Testis (tissue), 5 donors: ENCODE measurements at regions of chr2 and their contacts with region 1.

Region 1: DNA sequence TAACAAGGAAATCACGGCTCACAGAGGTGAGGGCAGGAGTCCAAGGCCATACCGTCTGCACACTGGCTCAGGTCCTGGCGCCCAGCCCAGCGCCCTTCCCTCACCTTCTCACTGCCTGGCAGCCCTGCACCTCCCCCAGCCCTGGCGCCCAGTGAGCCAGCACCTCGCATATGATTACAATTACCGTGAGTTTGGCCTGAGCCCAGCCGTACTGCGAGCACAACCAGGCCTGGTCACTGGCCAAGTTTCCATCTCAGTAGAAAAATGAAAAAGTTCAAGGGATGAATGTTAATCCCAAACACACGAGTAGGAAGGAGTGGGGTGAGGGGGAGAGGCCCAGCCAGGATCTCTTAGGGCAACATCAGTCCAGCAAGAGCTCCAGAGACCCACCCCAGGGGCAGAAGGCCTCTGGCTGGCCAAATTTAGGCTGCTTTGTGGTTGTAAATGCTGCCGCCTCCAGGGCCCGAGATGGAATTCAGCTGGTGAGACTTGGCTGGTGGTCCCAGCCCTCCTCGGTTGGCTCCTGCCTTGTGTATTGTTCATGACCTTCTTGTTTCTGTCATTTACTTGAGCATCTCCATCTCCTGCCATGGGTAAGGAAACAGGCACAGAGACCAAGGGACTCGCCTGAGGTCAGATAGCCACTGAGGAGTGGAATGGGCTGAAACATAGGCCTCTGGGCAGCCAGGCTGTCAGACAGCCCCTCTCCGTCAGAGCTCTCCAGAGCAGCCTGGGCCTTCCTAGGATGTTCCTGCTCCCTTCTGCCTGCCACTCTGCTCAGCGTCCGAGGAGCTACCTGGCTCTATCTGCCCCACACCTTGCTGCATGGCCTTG is 68.2 kb downstream of the MCFD2 start:
- DNase-seq: peak; percentile 95
- H3K4me3 ChIP-seq: no peak overlapping the region
- H3K27ac ChIP-seq: peak overlapping the region; percentile 84 to 89
- H3K4me1 ChIP-seq: peaks cover 55% of the 10 kb centered on the region
- H3K27me3 ChIP-seq: no peaks in the 10 kb centered on the region
- CTCF ChIP-seq: no peak
- POLR2A ChIP-seq: no peak

Region 2: DNA sequence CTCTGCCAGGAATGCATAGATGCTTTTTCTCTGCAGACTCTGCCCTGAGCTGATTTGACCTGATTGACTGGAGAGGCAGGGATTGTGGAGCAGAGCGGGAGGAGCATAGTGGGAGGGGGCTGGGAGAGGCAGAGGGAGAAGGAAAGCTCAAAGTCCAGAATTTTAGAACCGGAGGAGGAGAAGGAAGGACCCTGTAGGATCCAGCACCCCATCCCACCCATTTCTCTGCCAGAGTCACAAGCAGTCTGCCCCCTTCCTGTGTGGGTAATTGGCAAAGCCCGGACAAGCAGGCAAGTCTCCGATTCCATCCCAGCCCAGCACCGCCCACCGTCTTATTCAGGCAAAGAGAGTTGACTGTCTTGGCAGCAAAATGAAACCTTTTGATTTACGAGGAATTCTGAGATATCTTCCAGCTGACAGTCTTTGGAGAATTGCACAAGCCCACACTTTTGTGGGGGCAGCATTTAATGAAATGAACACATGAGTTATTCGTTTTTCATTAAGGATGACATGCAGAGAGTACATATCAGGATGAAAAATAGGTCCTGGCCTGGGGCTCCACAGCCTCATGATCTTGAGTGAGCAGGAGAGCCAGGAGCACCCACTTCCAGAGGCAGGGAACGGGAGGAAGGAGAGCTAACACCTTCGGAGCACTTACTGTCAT is 35.0 kb before region 1 on chr2:
- intact Hi-C with region 1: loop called (anchors 5 kb)
- DNase-seq: peak; percentile 39
- H3K4me3 ChIP-seq: no peak overlapping the region
- H3K27ac ChIP-seq: no peak overlapping the region
- H3K4me1 ChIP-seq: peaks cover 29% of the 10 kb centered on the region
- H3K27me3 ChIP-seq: no peaks in the 10 kb centered on the region
- CTCF ChIP-seq: no peak
- POLR2A ChIP-seq: no peak

Region 3: DNA sequence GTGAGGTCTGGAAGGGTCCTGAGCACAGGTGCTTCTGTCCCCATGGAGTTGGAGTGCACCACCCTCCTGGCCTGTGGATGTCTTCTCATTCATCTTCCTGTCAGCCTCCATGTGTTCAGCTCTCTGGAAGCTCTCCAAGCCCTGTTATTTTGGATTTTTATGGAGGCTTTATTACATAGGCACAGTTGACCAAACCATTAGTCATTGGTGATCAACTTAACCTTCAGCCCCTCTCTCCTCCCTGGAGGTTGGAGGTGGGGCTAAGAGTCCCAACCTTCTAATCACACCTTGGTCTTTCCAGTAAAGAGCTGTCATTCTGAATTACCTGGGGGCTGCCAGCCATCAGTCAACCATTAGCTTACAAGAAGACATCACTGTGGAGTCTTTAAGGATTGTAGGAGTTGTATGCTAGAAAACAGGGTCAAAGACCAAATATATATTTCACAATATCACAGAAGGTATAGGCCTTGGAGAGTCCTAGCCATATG is 75.6 kb after region 1 on chr2:
- intact Hi-C with region 1: no loop called
- DNase-seq: no peak
- H3K4me3 ChIP-seq: no peak overlapping the region
- H3K27ac ChIP-seq: no peak overlapping the region
- H3K4me1 ChIP-seq: no peaks in the 10 kb centered on the region
- H3K27me3 ChIP-seq: no peaks in the 10 kb centered on the region
- CTCF ChIP-seq: no peak
- POLR2A ChIP-seq: no peak

Region 4: GRCh38 chr2:47129191-47129706 is 281.8 kb after region 1 on chr2:
- intact Hi-C with region 1: no loop called
- DNase-seq: no peak
- H3K4me3 ChIP-seq: no peak overlapping the region
- H3K27ac ChIP-seq: no peak overlapping the region
- H3K4me1 ChIP-seq: no peaks in the 10 kb centered on the region
- H3K27me3 ChIP-seq: no peaks in the 10 kb centered on the region
- CTCF ChIP-seq: no peak
- POLR2A ChIP-seq: no peak